Activated B cell treated with CpG ODN at 0.5 μM for 24 hours (primary cell): ENCODE measurements at regions of chr17 and their contacts with region 1.

Region 1: GRCh38 chr17:3935140-3935542 is 18.9 kb upstream of the P2RX1 start:
- DNase-seq: no peak
- ATAC-seq: peak; percentile 84
- H3K4me3 Mint-ChIP-seq: no peak overlapping the region
- H3K27ac Mint-ChIP-seq: peak overlapping the region; percentile 59
- H3K4me1 Mint-ChIP-seq: no peaks in the 10 kb centered on the region
- H3K27me3 Mint-ChIP-seq: no peaks in the 10 kb centered on the region
- CTCF ChIP-seq: no peak

Region 2: GRCh38 chr17:3865176-3865575 is 70.0 kb before region 1 on chr17:
- CTCF ChIA-PET with region 1: interaction called, 3 read pairs
- POLR2A ChIA-PET with region 1: no interaction called
- intact Hi-C with region 1: loop called (anchors 2 kb)
- DNase-seq: no peak
- ATAC-seq: no peak
- H3K4me3 Mint-ChIP-seq: no peak overlapping the region
- H3K27ac Mint-ChIP-seq: no peak overlapping the region
- H3K4me1 Mint-ChIP-seq: no peaks in the 10 kb centered on the region
- H3K27me3 Mint-ChIP-seq: no peaks in the 10 kb centered on the region
- CTCF ChIP-seq: no peak

Region 3: GRCh38 chr17:3905017-3905520 is 30.1 kb before region 1 on chr17:
- CTCF ChIA-PET with region 1: no interaction called
- POLR2A ChIA-PET with region 1: no interaction called
- intact Hi-C with region 1: no loop called
- DNase-seq: peak; percentile 52
- ATAC-seq: peak; percentile 48
- H3K4me3 Mint-ChIP-seq: peak overlapping the region; percentile 7
- H3K27ac Mint-ChIP-seq: peak overlapping the region; percentile 61
- H3K4me1 Mint-ChIP-seq: peaks cover 40% of the 10 kb centered on the region
- H3K27me3 Mint-ChIP-seq: no peaks in the 10 kb centered on the region
- CTCF ChIP-seq: no peak

Region 4: DNA sequence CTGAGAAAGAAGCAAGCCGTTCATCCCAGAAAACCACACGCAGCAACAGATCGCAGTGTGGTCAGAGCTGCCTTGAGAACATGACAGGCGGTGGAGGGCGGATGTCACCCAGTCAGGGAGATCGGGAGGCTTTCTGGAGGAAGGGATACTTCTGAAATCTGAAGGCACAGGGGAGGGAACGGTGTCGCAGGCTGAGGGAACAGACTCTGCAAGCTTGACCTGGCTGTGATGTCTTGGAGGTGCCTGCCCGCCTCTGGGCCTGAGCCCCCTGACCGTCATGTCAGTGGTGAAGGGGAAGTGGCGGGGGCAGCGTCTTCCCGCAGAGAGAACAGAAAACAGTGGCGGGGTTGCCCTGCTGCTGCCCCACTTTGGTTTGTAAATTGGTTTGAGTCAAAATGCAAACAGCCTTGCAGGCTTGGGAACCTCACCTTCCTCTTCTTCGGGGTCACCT is 37.2 kb after region 1 on chr17:
- CTCF ChIA-PET with region 1: no interaction called
- POLR2A ChIA-PET with region 1: interaction called, 11 read pairs
- intact Hi-C with region 1: no loop called
- DNase-seq: peak; percentile 52
- ATAC-seq: peak; percentile 70
- H3K4me3 Mint-ChIP-seq: peak overlapping the region; percentile 68
- H3K27ac Mint-ChIP-seq: peak overlapping the region; percentile 71
- H3K4me1 Mint-ChIP-seq: peaks cover 59% of the 10 kb centered on the region
- H3K27me3 Mint-ChIP-seq: no peaks in the 10 kb centered on the region
- CTCF ChIP-seq: no peak

Region 5: GRCh38 chr17:4004517-4005295 is 69.6 kb after region 1 on chr17:
- CTCF ChIA-PET with region 1: interaction called, 22 read pairs
- POLR2A ChIA-PET with region 1: interaction called, 5 read pairs
- intact Hi-C with region 1: loop called (anchors 1 kb)
- DNase-seq: peak; percentile 77
- ATAC-seq: peak; percentile 80
- H3K4me3 Mint-ChIP-seq: peak overlapping the region; percentile 38
- H3K27ac Mint-ChIP-seq: no peak overlapping the region
- H3K4me1 Mint-ChIP-seq: peaks cover 24% of the 10 kb centered on the region
- H3K27me3 Mint-ChIP-seq: no peaks in the 10 kb centered on the region
- CTCF ChIP-seq: peak; percentile 96